Activated T-helper 1 cell treated with anti-CD3 and anti-CD28 coated beads, Interleukin-12 subunit alpha, Interleukin-12 subunit beta, Interleukin-2, Interleukin-4 antibody, amounts not matched to agents 30 ng/mL and 10 ng/mL and 1 ng/mL, durations not matched to agents 14 hours and 24 hours and 36 hours (primary cell): ENCODE measurements at regions of chr2 and their contacts with region 1.

Region 1: GRCh38 chr2:203934041-203934492 is 2.5 kb upstream of the ICOS start:
- DNase-seq: peak; percentile 39
- H3K4me3 Mint-ChIP-seq: peak overlapping the region; percentile 73
- H3K27ac Mint-ChIP-seq: peak overlapping the region; percentile 93
- H3K4me1 Mint-ChIP-seq: peaks cover 59% of the 10 kb centered on the region
- H3K27me3 Mint-ChIP-seq: no peaks in the 10 kb centered on the region

Region 2: DNA sequence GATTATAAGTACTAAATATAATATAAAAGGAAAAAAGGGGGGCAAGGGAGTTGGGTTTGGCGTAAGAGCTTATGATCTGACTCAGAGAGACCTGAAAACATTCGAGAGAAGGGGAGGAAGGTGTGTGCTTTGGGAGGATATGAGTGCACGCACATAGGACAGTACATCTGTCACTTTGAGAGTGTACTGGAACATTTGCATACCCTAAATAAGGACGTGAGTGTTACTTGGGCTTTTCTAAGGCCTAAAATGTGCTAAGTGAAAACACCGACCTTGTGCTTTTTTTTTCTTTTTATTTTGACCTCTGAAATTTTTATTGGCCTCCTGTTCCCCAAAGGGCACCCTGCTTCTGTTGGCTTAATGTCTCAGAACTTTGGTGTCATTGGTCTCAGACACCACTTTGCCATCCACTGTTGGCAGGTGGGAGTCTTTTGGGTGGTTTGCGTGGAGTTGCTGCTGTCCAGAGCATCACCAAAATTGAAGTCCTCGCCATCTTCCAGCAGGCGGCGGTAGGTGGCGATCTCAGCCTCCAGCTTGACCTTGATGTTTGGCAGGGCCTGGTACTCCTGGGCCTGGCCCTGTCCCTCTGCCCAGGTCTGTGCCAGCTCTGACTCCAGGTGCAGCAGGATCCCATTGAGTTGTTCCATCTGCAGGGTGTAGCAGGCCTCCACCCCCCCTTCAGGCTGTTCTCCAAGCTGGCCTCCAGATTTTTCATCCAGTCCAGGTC is 170.0 kb before region 1 on chr2:
- intact Hi-C with region 1: no loop called
- DNase-seq: peak; percentile 20
- H3K4me3 Mint-ChIP-seq: peak overlapping the region; percentile 22
- H3K27ac Mint-ChIP-seq: peak overlapping the region; percentile 95
- H3K4me1 Mint-ChIP-seq: peaks cover 66% of the 10 kb centered on the region
- H3K27me3 Mint-ChIP-seq: no peaks in the 10 kb centered on the region

Region 3: GRCh38 chr2:203887677-203888076 is 46.4 kb before region 1 on chr2:
- intact Hi-C with region 1: loop called (anchors 1 kb)
- DNase-seq: no peak
- H3K4me3 Mint-ChIP-seq: no peak overlapping the region
- H3K27ac Mint-ChIP-seq: peak overlapping the region; percentile 27
- H3K4me1 Mint-ChIP-seq: peaks cover 74% of the 10 kb centered on the region
- H3K27me3 Mint-ChIP-seq: no peaks in the 10 kb centered on the region

Region 4: DNA sequence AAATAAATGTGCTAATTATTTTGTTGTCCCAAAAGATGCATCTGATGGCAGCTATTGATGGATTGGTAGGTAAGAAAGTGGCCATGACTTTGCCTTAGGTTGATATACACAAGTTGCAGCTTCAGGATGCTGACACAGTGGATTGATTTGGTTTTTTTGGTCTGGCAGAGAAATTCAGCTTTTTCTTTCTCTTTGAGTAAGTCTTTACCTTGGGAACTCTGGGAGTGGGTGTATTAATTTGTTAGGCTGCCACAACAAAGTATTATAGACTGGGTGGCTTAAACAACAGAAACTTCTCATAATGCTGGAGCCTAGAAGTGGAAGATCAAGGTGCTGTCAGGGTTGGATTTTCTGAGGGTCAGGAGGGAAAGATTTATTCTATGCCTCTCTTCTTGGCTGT is 17.3 kb before region 1 on chr2:
- intact Hi-C with region 1: loop called (anchors 2 kb)
- DNase-seq: no peak
- H3K4me3 Mint-ChIP-seq: no peak overlapping the region
- H3K27ac Mint-ChIP-seq: peak overlapping the region; percentile 3
- H3K4me1 Mint-ChIP-seq: peaks cover 45% of the 10 kb centered on the region
- H3K27me3 Mint-ChIP-seq: peaks cover 2% of the 10 kb centered on the region

Region 5: GRCh38 chr2:203951366-203951902 is 17.4 kb after region 1 on chr2:
- intact Hi-C with region 1: loop called (anchors 2 kb)
- DNase-seq: peak; percentile 34
- H3K4me3 Mint-ChIP-seq: peak overlapping the region; percentile 85
- H3K27ac Mint-ChIP-seq: peak overlapping the region; percentile 92
- H3K4me1 Mint-ChIP-seq: peaks cover 85% of the 10 kb centered on the region
- H3K27me3 Mint-ChIP-seq: no peaks in the 10 kb centered on the region

Region 6: DNA sequence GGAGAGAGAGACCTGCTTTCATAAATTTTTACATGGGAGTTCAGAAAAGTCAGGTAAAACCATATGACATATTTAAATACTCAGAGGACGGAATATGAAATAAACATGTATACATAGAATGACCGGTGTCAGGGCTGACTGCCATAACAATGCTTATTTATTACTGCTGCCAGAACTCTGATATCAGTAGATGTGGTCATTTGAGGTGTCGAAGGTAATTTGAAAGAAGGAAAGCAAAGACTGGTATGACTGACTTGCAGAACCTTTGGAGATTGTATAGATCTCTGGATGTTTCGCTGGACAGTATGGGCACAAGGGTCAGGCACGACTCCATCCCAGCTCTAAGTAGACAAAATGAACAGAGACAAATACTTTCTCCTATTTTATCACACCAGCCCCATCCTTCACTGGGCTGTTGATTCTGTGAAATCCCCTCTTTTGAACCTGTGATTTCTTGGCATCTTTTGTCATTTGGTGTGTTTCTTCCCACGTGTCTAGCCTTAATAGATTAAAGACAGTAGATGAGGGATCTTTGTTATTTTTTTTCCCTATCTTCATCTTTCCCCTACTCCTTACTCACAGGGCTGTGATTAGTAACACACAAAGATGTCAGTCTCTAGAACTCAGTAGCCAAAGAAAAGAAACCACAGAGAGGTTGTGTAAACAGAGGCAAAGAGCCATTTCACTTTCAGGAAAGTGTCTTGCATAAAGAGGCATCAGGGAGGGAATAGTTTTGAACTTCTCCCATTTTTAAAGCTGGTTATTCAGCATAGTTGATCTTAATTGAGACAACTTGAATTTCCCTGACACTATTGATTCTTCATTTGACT is 64.1 kb after region 1 on chr2:
- intact Hi-C with region 1: loop called (anchors 1 kb)
- DNase-seq: no peak
- H3K4me3 Mint-ChIP-seq: peak overlapping the region; percentile 47
- H3K27ac Mint-ChIP-seq: peak overlapping the region; percentile 83
- H3K4me1 Mint-ChIP-seq: peaks cover 66% of the 10 kb centered on the region
- H3K27me3 Mint-ChIP-seq: no peaks in the 10 kb centered on the region

Region 7: DNA sequence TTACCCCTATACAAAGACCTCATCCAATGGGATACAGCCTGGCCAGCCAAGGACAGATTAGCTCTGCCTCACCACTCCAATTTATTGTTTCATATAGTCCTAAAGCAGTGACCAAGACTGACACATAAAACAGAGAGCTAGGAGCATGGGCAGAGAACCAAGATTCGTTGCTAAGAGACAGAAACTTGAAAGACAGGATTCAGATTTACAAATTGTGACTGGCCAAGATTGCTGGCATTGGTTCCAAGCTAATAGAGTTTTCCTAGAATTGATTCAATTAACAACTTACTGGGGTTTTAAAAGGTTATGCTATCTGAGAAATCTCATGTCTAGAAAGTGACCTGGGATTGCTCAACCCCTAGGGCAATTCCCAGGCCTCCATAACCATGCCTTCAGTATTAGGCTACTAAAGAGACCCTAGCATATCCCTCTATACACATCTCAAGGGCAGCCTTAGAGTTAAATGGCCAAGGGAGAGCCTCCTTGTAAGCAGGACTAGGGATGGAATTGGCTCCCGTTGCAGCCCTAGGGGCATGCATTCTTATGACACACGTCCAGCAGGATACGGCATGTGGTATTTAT is 78.1 kb after region 1 on chr2:
- intact Hi-C with region 1: no loop called
- DNase-seq: no peak
- H3K4me3 Mint-ChIP-seq: no peak overlapping the region
- H3K27ac Mint-ChIP-seq: no peak overlapping the region
- H3K4me1 Mint-ChIP-seq: peaks cover 85% of the 10 kb centered on the region
- H3K27me3 Mint-ChIP-seq: no peaks in the 10 kb centered on the region

Region 8: DNA sequence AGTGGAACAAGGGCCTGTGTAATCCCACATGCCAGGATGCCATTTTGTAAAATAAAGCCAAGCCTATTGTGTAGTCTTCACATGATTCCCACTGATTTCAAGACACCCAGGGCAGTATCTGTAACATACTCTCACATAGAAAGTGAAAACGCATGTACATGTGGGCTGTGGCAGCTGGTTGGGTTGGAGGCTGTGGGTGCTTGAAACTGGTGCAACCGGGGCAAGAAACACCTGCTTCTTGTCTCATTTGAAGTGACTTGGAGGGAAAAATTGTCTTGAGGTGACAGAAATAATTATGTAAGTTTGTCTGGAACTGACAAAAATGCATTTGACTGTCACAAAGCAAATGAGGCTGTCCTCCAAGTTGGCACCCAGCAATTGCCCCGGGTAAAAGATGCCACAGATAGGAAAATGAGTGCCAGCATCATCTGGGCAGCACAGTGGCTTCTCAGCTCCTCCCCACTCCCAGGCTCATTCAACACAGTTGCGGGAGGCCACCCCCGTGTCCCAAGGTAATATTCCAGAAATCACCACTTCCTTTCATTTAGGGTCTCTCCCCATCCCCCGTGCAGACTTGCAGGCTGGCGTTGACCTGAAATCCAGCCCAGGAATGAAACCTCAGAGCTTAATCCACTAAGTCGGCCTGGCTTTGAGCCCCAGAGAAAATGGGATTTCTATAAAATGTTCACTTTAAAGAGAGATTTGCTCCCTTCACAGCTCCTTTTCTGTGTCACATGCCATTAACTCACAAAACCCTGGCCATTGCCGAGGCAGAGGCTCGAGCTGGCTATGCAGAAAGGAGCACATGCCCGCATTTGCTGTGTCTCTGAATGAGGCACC is 317.3 kb after region 1 on chr2:
- intact Hi-C with region 1: loop called (anchors 10 kb)
- DNase-seq: no peak
- H3K4me3 Mint-ChIP-seq: no peak overlapping the region
- H3K27ac Mint-ChIP-seq: no peak overlapping the region
- H3K4me1 Mint-ChIP-seq: no peaks in the 10 kb centered on the region
- H3K27me3 Mint-ChIP-seq: peaks cover 9% of the 10 kb centered on the region